ENCODE measurements at regions of chr5 and their contacts with region 1.

Region 1: DNA sequence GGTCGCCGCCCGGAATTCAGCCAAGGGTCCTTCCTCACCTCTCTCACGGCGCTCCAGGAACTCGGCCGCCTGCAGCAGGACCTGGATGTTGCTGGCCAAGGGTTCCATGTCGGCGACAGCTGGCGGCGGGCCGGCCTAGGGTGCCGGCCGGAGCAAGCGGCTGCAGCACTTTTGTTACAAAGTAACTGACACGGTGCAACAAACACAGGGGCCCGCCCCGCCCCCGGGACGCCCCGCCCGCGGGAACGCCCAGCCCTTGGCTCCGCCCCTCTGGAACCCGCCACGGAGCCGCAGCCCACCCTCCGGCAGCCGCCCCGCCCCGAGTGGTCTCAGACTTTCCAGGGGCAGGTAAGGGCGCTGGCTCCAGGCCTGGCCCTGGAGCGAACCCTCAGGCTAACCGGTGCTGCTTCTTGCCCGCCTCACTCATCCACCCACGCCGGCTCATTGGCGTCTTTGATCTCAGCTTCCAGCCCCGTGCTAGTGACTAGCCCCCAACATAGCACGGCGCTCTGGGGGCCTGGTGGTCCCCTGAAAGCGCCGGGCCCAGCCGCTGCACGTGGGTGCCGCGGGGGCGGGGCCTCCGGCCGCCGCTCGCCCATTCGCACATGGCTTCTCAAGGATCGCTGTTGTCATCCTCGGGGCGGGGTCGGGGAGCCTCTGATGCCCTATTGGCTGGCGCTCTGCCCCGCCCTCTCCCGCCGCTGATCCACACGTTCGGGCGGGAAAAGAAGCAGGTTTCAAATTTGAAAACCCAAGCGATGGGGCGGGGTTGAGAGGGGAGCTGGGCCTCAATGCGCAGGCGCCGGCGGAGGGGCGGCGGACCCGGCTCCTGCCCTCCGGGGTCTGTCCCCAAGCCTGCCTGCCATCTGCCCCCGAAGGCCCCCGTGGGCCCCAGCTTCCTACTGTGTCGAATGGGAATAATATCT is at the start of gene MXD3:
- DNase-seq: peak; percentile 99
- H3K4me3 ChIP-seq: peak within 1 kb of the TSS; percentile 93
- H3K4me3 Mint-ChIP-seq: peak within 1 kb of the TSS; percentile 82
- H3K27ac Mint-ChIP-seq: peak within 1 kb of the TSS; percentile 93
- H3K4me1 ChIP-seq: peaks cover 11% of the 10 kb centered on the region
- H3K4me1 Mint-ChIP-seq: peaks cover 13% of the 10 kb centered on the region
- H3K27me3 ChIP-seq: no peaks in the 10 kb centered on the region
- H3K27me3 Mint-ChIP-seq: no peaks in the 10 kb centered on the region
- CTCF ChIP-seq: no peak
- total RNA-seq, gene MXD3: 19.8 and 20.6 TPM in 2 replicates

Region 2: GRCh38 chr5:177113566-177114424 is 198.2 kb before region 1 on chr5:
- CTCF ChIA-PET with region 1: interaction called, 12 read pairs
- POLR2A ChIA-PET with region 1: no interaction called
- intact Hi-C with region 1: no loop called
- DNase-seq: peak; percentile 65 to 85
- H3K4me3 ChIP-seq: no peak overlapping the region
- H3K4me3 Mint-ChIP-seq: no peak overlapping the region
- H3K27ac Mint-ChIP-seq: no peak overlapping the region
- H3K4me1 ChIP-seq: peaks cover 4% of the 10 kb centered on the region; the same call in 1 of the 2 replicates
- H3K4me1 Mint-ChIP-seq: peaks cover 22% of the 10 kb centered on the region
- H3K27me3 ChIP-seq: no peaks in the 10 kb centered on the region
- H3K27me3 Mint-ChIP-seq: no peaks in the 10 kb centered on the region
- CTCF ChIP-seq: peak; percentile 95 to 99

Region 3: DNA sequence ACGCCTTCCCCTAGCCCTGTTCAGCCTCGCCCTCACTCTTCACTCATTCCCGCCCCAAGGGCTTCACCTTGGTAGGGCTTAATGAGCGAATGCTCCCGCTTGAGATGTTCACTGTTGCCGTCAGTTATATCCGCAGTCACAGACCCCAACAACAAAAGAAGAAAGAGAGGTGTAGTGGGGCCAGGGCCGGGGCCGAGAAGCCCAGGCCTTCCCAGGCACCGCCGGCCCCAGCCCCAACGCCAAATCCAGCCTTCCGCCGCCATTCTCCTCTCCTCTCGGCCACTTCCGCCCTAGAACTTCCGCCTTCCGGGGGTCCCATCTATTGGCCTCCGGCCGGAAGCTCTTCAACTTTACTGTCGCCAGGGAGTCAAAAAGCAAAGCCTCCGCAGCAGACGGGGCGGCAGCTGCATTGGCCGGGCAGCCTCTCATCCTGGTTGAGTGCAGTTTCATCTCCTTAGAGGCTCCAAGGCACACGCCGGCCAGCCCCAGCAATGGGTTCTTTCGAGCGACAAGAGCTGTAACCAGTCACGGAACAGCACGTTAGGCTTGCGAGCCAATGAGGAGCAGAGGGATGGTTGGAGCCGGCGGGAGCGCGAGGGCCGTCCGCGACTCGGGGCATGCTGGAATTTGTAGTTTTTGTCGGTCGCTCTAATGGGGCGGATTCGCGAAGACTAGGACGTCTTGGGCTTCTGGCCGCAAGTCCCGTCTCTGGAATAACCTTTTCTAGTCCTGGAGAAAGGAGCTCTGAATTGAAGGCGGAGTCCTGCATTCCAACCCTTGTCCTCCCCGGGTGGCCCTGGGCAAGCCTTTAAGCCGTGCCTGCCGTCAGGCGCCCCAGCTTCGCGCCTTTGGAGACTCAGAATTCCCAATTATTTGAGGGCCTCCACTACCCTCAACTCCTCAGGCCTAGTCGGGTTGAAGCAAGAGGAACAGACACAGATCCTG is 39.7 kb after region 1 on chr5 and contains the start of gene LMAN2:
- CTCF ChIA-PET with region 1: interaction called, 6 read pairs
- POLR2A ChIA-PET with region 1: interaction called, 4 read pairs
- intact Hi-C with region 1: loop called (anchors 2 kb)
- DNase-seq: peak; percentile 95 to 96
- H3K4me3 ChIP-seq: peak within 1 kb of the TSS; percentile 70
- H3K4me3 Mint-ChIP-seq: peak within 1 kb of the TSS; percentile 95
- H3K27ac Mint-ChIP-seq: peak within 1 kb of the TSS; percentile 100
- H3K4me1 ChIP-seq: peaks cover 12% of the 10 kb centered on the region; the same call in 1 of the 2 replicates
- H3K4me1 Mint-ChIP-seq: peaks cover 27% of the 10 kb centered on the region
- H3K27me3 ChIP-seq: no peaks in the 10 kb centered on the region
- H3K27me3 Mint-ChIP-seq: no peaks in the 10 kb centered on the region
- CTCF ChIP-seq: no peak
- total RNA-seq, gene LMAN2: 240 and 241 TPM in 2 replicates

Region 4: GRCh38 chr5:177382423-177383029 is 70.5 kb after region 1 on chr5:
- CTCF ChIA-PET with region 1: interaction called, 11 read pairs
- POLR2A ChIA-PET with region 1: no interaction called
- intact Hi-C with region 1: no loop called
- DNase-seq: peak in 1 of 2 experiments; percentile 53
- H3K4me3 ChIP-seq: no peak overlapping the region
- H3K4me3 Mint-ChIP-seq: no peak overlapping the region
- H3K27ac Mint-ChIP-seq: peak overlapping the region; percentile 36
- H3K4me1 ChIP-seq: peaks cover 30% of the 10 kb centered on the region
- H3K4me1 Mint-ChIP-seq: peaks cover 30% of the 10 kb centered on the region
- H3K27me3 ChIP-seq: no peaks in the 10 kb centered on the region
- H3K27me3 Mint-ChIP-seq: no peaks in the 10 kb centered on the region
- CTCF ChIP-seq: peak in 1 of 2 experiments; percentile 36

Region 5: DNA sequence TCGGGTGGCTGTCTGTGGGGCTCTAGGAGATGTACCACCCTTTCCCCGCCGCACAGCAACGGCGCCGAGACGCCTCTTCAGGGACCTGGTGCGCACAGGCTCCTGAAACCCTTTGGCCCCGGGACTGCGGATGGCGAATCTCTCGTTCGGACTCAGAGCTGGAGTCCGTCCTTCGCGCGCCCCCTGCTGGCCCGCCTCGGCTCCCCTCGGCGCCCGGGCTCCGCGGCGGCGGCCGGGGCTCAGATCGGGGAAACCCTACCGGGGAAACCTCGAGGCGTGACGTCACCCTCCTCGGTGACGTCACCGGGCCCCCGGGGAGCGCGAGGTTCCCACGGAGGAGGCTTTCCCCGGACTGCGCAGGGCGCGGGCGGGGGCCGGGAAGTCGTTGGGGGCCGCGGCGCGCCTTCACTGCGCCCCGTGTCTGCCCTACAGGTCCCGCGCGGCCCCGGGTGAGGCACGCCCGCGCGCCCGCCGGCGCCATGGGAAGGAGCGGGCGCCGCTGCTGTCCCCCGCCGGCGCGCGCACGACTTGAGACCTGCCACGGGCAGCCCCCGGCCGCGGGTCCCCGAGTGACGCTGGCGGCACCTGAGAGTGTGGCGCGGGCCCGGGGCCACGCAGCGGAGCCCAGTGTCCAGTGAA is 142.5 kb after region 1 on chr5:
- CTCF ChIA-PET with region 1: interaction called, 23 read pairs
- POLR2A ChIA-PET with region 1: interaction called, 3 read pairs
- intact Hi-C with region 1: loop called (anchors 2 kb)
- DNase-seq: peak; percentile 90 to 97
- H3K4me3 ChIP-seq: peak overlapping the region; percentile 92
- H3K4me3 Mint-ChIP-seq: peak overlapping the region; percentile 77
- H3K27ac Mint-ChIP-seq: peak overlapping the region; percentile 87
- H3K4me1 ChIP-seq: peaks cover 7% of the 10 kb centered on the region; the same call in 1 of the 2 replicates
- H3K4me1 Mint-ChIP-seq: peaks cover 7% of the 10 kb centered on the region
- H3K27me3 ChIP-seq: no peaks in the 10 kb centered on the region
- H3K27me3 Mint-ChIP-seq: no peaks in the 10 kb centered on the region
- CTCF ChIP-seq: peak; percentile 62 to 95